Activated CD4-positive, alpha-beta memory T cell treated with anti-CD3 and anti-CD28 coated beads for 36 hours (primary cell): ENCODE measurements at regions of chr6 and their contacts with region 1.

Region 1: GRCh38 chr6:29589423-29590048 is 4.6 kb downstream of the OR2H2 start:
- DNase-seq: peak; percentile 58
- H3K4me3 Mint-ChIP-seq: no peak overlapping the region
- H3K27ac Mint-ChIP-seq: no peak overlapping the region
- H3K4me1 Mint-ChIP-seq: no peaks in the 10 kb centered on the region
- H3K27me3 Mint-ChIP-seq: peaks cover 14% of the 10 kb centered on the region

Region 2: GRCh38 chr6:29376003-29376402 is 213.5 kb before region 1 on chr6:
- CTCF ChIA-PET with region 1: interaction called, 4 read pairs
- POLR2A ChIA-PET with region 1: no interaction called
- intact Hi-C with region 1: loop called (anchors 10 kb)
- DNase-seq: no peak
- H3K4me3 Mint-ChIP-seq: no peak overlapping the region
- H3K27ac Mint-ChIP-seq: no peak overlapping the region
- H3K4me1 Mint-ChIP-seq: no peaks in the 10 kb centered on the region
- H3K27me3 Mint-ChIP-seq: peaks cover 20% of the 10 kb centered on the region

Region 3: GRCh38 chr6:29517728-29518440 is 71.7 kb before region 1 on chr6:
- CTCF ChIA-PET with region 1: no interaction called
- POLR2A ChIA-PET with region 1: no interaction called
- intact Hi-C with region 1: no loop called
- DNase-seq: no peak
- H3K4me3 Mint-ChIP-seq: no peak overlapping the region
- H3K27ac Mint-ChIP-seq: no peak overlapping the region
- H3K4me1 Mint-ChIP-seq: peaks cover 12% of the 10 kb centered on the region
- H3K27me3 Mint-ChIP-seq: peaks cover 11% of the 10 kb centered on the region

Region 4: DNA sequence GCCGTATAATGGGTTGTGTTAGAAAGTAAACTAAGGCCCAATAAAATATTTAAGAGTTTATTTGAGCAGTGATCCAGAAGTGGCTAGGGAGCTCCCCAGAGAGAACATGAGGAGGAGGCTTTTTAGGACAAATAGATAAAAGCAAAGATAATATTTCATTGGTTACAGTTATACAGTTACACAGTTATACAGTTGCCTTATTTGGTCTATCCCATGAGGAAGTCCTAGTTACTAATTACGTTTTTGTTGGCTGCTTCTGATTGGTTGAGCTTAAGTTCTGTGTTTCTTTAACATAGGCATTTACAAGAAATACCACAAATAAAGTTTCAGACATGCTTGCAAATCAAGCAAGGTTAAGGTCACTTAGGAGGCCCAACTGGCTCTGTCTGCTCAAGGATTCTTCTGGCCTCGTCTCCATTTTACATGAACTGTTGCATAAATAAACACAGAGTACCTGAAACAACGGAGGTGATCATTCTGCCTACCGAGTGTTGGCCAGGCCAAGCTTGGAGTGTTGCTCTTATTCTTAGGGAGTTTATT is 37.0 kb before region 1 on chr6:
- CTCF ChIA-PET with region 1: no interaction called
- POLR2A ChIA-PET with region 1: no interaction called
- intact Hi-C with region 1: no loop called
- DNase-seq: no peak
- H3K4me3 Mint-ChIP-seq: no peak overlapping the region
- H3K27ac Mint-ChIP-seq: no peak overlapping the region
- H3K4me1 Mint-ChIP-seq: peaks cover 21% of the 10 kb centered on the region
- H3K27me3 Mint-ChIP-seq: peaks cover 48% of the 10 kb centered on the region